Caco-2 (cell line): ENCODE measurements at regions of chr10 and their contacts with region 1.

Region 1: DNA sequence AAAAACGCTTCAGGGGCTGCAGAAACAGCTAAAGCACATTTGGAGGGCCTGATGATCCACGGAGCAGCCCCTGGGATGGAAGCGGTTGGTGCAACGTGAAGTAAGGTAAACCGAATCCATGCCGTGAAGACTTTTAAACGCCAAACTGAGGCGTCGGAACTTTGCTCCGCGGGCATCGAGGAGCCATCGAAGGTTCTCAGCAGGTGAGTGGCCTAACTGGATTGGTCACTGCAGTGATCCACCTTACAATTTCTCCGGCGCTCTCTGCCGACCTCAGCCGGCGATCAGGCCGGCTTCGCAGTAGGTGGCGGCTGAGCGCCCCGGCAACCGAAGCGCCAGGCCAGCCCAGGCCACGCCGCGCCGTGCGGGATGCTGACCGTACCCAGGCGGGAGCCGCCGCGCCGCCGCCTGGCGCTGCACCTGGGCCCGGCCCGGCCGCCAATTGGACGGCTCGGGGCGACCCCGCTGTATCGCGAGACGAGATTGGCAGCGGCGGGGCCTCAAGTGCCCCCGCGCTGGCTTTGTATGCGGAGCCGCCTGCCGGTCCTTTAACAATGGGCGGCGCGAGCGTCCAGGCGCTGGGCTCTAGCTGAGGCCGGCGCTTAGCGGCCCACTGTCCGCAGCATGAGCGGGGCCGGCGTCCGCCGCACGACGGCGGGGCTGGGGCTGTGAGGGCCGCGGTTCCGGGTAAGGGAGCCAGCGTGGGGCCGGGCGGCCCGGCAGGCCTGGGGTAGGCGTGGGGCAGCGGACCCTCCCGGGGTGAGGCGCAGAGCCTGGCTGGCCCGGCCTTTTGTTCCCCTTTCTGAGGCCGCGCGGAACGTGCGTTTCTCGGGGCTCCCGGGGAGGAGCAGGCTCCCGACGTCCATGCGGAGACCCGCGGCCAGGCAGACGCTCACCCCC is at the start of gene CCNJ:
- DNase-seq: peak; percentile 91 to 95
- H3K4me3 ChIP-seq: peak within 1 kb of the TSS; percentile 97
- H3K4me3 Mint-ChIP-seq: peak within 1 kb of the TSS; percentile 84
- H3K27ac Mint-ChIP-seq: peak within 1 kb of the TSS; percentile 93
- H3K4me1 ChIP-seq: peaks cover 47% of the 10 kb centered on the region
- H3K4me1 Mint-ChIP-seq: peaks cover 33% of the 10 kb centered on the region
- H3K27me3 ChIP-seq: no peaks in the 10 kb centered on the region
- H3K27me3 Mint-ChIP-seq: no peaks in the 10 kb centered on the region
- CTCF ChIP-seq: peak; percentile 18 to 19
- total RNA-seq, gene CCNJ: 22.2 and 23.5 TPM in 2 replicates

Region 2: DNA sequence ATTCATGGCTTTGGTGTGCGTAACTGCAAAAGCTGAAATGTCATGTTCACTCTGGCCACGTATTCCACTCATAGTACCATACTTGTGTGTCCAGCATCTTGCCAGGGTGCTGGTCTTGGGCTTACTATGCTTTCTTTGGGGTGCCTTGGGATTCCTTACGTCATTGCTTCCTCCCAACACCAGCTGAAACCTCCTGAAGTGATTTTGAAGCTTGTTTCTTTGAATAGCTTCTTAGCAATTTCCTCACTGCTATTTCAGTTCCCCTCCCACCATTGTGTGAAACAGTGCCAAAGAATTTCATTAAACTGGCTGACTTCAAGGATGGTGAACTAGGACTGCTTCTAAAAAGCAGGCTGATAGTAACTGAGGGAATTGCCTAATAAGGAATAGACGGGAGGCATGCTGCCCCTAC is 250.4 kb before region 1 on chr10:
- CTCF ChIA-PET with region 1: no interaction called
- POLR2A ChIA-PET with region 1: no interaction called
- intact Hi-C with region 1: no loop called
- DNase-seq: no peak
- H3K4me3 ChIP-seq: no peak overlapping the region
- H3K4me3 Mint-ChIP-seq: no peak overlapping the region
- H3K27ac Mint-ChIP-seq: no peak overlapping the region
- H3K4me1 ChIP-seq: no peaks in the 10 kb centered on the region
- H3K4me1 Mint-ChIP-seq: no peaks in the 10 kb centered on the region
- H3K27me3 ChIP-seq: no peaks in the 10 kb centered on the region
- H3K27me3 Mint-ChIP-seq: no peaks in the 10 kb centered on the region
- CTCF ChIP-seq: no peak

Region 3: DNA sequence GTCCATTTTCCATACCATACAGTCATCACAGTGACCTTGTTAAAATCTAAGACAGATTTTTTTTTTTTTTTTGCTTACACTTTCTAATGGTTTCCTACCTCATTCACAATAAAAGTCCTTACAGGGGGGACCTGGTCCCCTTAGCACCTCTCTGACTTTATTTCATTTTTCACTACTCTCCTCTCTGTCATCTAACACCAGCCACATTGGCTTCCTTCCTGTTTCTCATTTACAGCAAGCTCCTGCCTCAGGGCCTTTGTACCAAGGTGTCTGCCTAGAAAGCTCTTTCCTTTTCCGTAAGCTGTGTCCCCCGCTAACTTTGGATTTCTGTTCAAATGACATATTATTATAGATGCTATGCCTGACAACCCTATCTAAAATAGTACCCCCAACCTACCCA is 107.9 kb before region 1 on chr10:
- CTCF ChIA-PET with region 1: no interaction called
- POLR2A ChIA-PET with region 1: no interaction called
- intact Hi-C with region 1: no loop called
- DNase-seq: no peak
- H3K4me3 ChIP-seq: no peak overlapping the region
- H3K4me3 Mint-ChIP-seq: no peak overlapping the region
- H3K27ac Mint-ChIP-seq: no peak overlapping the region
- H3K4me1 ChIP-seq: no peaks in the 10 kb centered on the region
- H3K4me1 Mint-ChIP-seq: no peaks in the 10 kb centered on the region
- H3K27me3 ChIP-seq: no peaks in the 10 kb centered on the region; the same call in 1 of the 2 replicates
- H3K27me3 Mint-ChIP-seq: peaks cover 9% of the 10 kb centered on the region
- CTCF ChIP-seq: no peak

Region 4: DNA sequence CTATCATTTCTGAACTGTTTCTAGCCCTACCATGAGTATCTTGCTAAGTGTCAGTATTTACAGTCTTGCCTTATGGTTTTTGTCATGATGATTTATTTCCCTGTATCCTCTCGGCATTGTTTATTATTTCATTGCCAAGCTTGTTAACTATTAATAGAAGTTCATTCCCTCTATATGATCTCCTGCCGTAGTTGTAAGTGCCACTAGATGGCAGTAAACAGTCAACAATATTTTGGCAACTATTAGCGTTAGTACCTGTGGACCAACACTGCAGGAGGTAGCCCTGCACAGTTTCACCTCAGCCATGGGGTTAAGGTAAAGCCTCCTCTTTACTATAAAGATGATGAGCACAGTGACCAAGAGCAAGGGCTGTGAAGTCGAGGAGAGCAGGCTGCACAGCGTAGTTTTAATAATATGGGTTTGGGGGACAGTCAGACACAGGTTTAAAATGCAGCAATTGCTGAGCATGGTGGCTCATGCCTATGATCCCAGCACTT is 26.0 kb before region 1 on chr10:
- CTCF ChIA-PET with region 1: interaction called, 9 read pairs
- POLR2A ChIA-PET with region 1: no interaction called
- intact Hi-C with region 1: loop called (anchors 1 kb)
- DNase-seq: peak; percentile 54 to 75
- H3K4me3 ChIP-seq: no peak overlapping the region
- H3K4me3 Mint-ChIP-seq: no peak overlapping the region
- H3K27ac Mint-ChIP-seq: no peak overlapping the region
- H3K4me1 ChIP-seq: 0 out of 2 replicates have a peak, but pooled peaks cover 5% of the 10 kb centered on the region
- H3K4me1 Mint-ChIP-seq: peaks cover 6% of the 10 kb centered on the region
- H3K27me3 ChIP-seq: no peaks in the 10 kb centered on the region
- H3K27me3 Mint-ChIP-seq: no peaks in the 10 kb centered on the region
- CTCF ChIP-seq: peak; percentile 64 to 75

Region 5: GRCh38 chr10:96025566-96025965 is 17.7 kb before region 1 on chr10:
- CTCF ChIA-PET with region 1: no interaction called
- POLR2A ChIA-PET with region 1: no interaction called
- intact Hi-C with region 1: loop called (anchors 2 kb)
- DNase-seq: peak; percentile 52 to 58
- H3K4me3 ChIP-seq: no peak overlapping the region
- H3K4me3 Mint-ChIP-seq: no peak overlapping the region
- H3K27ac Mint-ChIP-seq: no peak overlapping the region
- H3K4me1 ChIP-seq: peaks cover 4% of the 10 kb centered on the region
- H3K4me1 Mint-ChIP-seq: peaks cover 7% of the 10 kb centered on the region
- H3K27me3 ChIP-seq: no peaks in the 10 kb centered on the region
- H3K27me3 Mint-ChIP-seq: no peaks in the 10 kb centered on the region
- CTCF ChIP-seq: peak; percentile 48 to 50

Region 6: GRCh38 chr10:96053985-96054384 is 10.7 kb after region 1 on chr10:
- CTCF ChIA-PET with region 1: no interaction called
- POLR2A ChIA-PET with region 1: no interaction called
- intact Hi-C with region 1: no loop called
- DNase-seq: no peak
- H3K4me3 ChIP-seq: no peak overlapping the region
- H3K4me3 Mint-ChIP-seq: no peak overlapping the region
- H3K27ac Mint-ChIP-seq: no peak overlapping the region
- H3K4me1 ChIP-seq: no peaks in the 10 kb centered on the region
- H3K4me1 Mint-ChIP-seq: peaks cover 9% of the 10 kb centered on the region
- H3K27me3 ChIP-seq: no peaks in the 10 kb centered on the region
- H3K27me3 Mint-ChIP-seq: no peaks in the 10 kb centered on the region
- CTCF ChIP-seq: no peak

Region 7: GRCh38 chr10:96129387-96130325 is 86.4 kb after region 1 on chr10 and contains the start of gene ZNF518A:
- CTCF ChIA-PET with region 1: interaction called, 5 read pairs
- POLR2A ChIA-PET with region 1: interaction called, 22 read pairs
- intact Hi-C with region 1: loop called (anchors 1 kb)
- DNase-seq: peak; percentile 95 to 97
- H3K4me3 ChIP-seq: peak within 1 kb of the TSS; percentile 75
- H3K4me3 Mint-ChIP-seq: peak within 1 kb of the TSS; percentile 93
- H3K27ac Mint-ChIP-seq: peak within 1 kb of the TSS; percentile 96
- H3K4me1 ChIP-seq: peaks cover 17% of the 10 kb centered on the region
- H3K4me1 Mint-ChIP-seq: peaks cover 12% of the 10 kb centered on the region
- H3K27me3 ChIP-seq: no peaks in the 10 kb centered on the region
- H3K27me3 Mint-ChIP-seq: no peaks in the 10 kb centered on the region
- CTCF ChIP-seq: no peak
- total RNA-seq, gene ZNF518A: 47.2 TPM in 2 replicates

Region 8: GRCh38 chr10:96292971-96293920 is 250.0 kb after region 1 on chr10:
- CTCF ChIA-PET with region 1: no interaction called
- POLR2A ChIA-PET with region 1: no interaction called
- intact Hi-C with region 1: loop called (anchors 1 kb)
- DNase-seq: peak in 1 of 2 experiments; percentile 45
- H3K4me3 ChIP-seq: no peak overlapping the region
- H3K4me3 Mint-ChIP-seq: no peak overlapping the region
- H3K27ac Mint-ChIP-seq: no peak overlapping the region
- H3K4me1 ChIP-seq: peaks cover 4% of the 10 kb centered on the region
- H3K4me1 Mint-ChIP-seq: peaks cover 7% of the 10 kb centered on the region
- H3K27me3 ChIP-seq: no peaks in the 10 kb centered on the region
- H3K27me3 Mint-ChIP-seq: peaks cover 8% of the 10 kb centered on the region
- CTCF ChIP-seq: peak; percentile 56 to 60

Region 9: GRCh38 chr10:96789571-96790108 is 746.4 kb after region 1 on chr10:
- CTCF ChIA-PET with region 1: no interaction called
- POLR2A ChIA-PET with region 1: no interaction called
- intact Hi-C with region 1: no loop called
- DNase-seq: peak in 1 of 2 experiments; percentile 16
- H3K4me3 ChIP-seq: no peak overlapping the region
- H3K4me3 Mint-ChIP-seq: no peak overlapping the region
- H3K27ac Mint-ChIP-seq: no peak overlapping the region
- H3K4me1 ChIP-seq: peaks cover 11% of the 10 kb centered on the region
- H3K4me1 Mint-ChIP-seq: peaks cover 4% of the 10 kb centered on the region
- H3K27me3 ChIP-seq: no peaks in the 10 kb centered on the region
- H3K27me3 Mint-ChIP-seq: no peaks in the 10 kb centered on the region
- CTCF ChIP-seq: peak in 1 of 2 experiments; percentile 8